ENCODE measurements at regions of chr16 and their contacts with region 1.

Region 1: GRCh38 chr16:11094072-11094856 is 149.9 kb downstream of the CLEC16A start:
- DNase-seq: peak; percentile 88
- H3K4me3 Mint-ChIP-seq: peak overlapping the region; percentile 11
- H3K27ac Mint-ChIP-seq: peak overlapping the region; percentile 95
- H3K4me1 Mint-ChIP-seq: peaks cover 68% of the 10 kb centered on the region
- H3K27me3 Mint-ChIP-seq: no peaks in the 10 kb centered on the region

Region 2: GRCh38 chr16:11051879-11052808 is 42.1 kb before region 1 on chr16:
- CTCF ChIA-PET with region 1: interaction called, 8 read pairs
- intact Hi-C with region 1: loop called (anchors 1 kb)
- DNase-seq: peak; percentile 71
- H3K4me3 Mint-ChIP-seq: no peak overlapping the region
- H3K27ac Mint-ChIP-seq: peak overlapping the region; percentile 54
- H3K4me1 Mint-ChIP-seq: peaks cover 31% of the 10 kb centered on the region
- H3K27me3 Mint-ChIP-seq: no peaks in the 10 kb centered on the region

Region 3: GRCh38 chr16:11105038-11105903 is 11.0 kb after region 1 on chr16:
- CTCF ChIA-PET with region 1: interaction called, 14 read pairs
- intact Hi-C with region 1: loop called (anchors 1 kb)
- DNase-seq: peak; percentile 74
- H3K4me3 Mint-ChIP-seq: no peak overlapping the region
- H3K27ac Mint-ChIP-seq: peak overlapping the region; percentile 84
- H3K4me1 Mint-ChIP-seq: peaks cover 41% of the 10 kb centered on the region
- H3K27me3 Mint-ChIP-seq: no peaks in the 10 kb centered on the region

Region 4: GRCh38 chr16:11224096-11224893 is 130.0 kb after region 1 on chr16:
- CTCF ChIA-PET with region 1: interaction called, 6 read pairs
- intact Hi-C with region 1: loop called (anchors 1 kb)
- DNase-seq: peak; percentile 86
- H3K4me3 Mint-ChIP-seq: peak overlapping the region; percentile 35
- H3K27ac Mint-ChIP-seq: peak overlapping the region; percentile 96
- H3K4me1 Mint-ChIP-seq: peaks cover 51% of the 10 kb centered on the region
- H3K27me3 Mint-ChIP-seq: no peaks in the 10 kb centered on the region

Region 5: DNA sequence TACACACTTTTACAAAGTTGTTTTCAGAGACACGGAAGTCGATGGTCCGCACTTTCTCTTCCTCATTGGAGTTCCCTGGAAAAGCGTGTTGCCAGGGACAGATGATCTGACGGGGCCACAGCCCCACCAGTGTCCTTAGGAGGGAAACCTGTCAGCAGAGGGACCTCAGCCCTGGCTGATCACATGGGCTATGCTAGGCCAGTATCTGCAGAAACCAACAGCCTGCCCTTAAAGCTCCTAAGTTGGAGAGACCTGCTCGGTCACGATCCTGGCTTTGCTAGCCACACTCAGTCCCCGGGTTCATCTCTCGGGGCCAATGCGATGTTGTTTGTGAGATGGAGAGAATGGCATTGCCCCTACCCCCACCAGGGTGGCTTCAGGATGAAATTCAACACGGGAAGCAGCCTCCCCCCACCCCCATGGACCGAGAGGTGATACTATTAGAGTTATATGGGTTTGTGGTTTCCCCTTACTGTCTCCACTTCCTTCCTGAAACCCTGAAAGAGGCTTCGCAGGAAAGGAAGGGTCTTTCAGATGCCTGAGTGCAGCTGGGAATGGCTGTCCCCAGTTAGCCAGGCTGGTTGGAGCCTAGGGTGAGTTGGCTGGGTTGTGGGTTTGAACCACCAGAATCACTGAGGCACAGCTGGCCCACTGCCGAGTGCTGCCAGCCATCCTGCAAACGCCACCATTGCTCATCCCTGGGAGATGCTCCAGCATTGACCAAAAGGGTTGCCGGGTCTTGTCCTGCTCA is 267.6 kb after region 1 on chr16:
- CTCF ChIA-PET with region 1: no interaction called
- intact Hi-C with region 1: loop called (anchors 2 kb)
- DNase-seq: peak; percentile 76
- H3K4me3 Mint-ChIP-seq: peak overlapping the region; percentile 48
- H3K27ac Mint-ChIP-seq: peak overlapping the region; percentile 21
- H3K4me1 Mint-ChIP-seq: peaks cover 52% of the 10 kb centered on the region
- H3K27me3 Mint-ChIP-seq: no peaks in the 10 kb centered on the region